GM10248 (cell line): ENCODE measurements at regions of chr14 and their contacts with region 1.

Region 1: GRCh38 chr14:89040460-89041259 is 216.2 kb downstream of the TTC8 start:
- DNase-seq: peak; percentile 80
- CTCF ChIP-seq: peak; percentile 95

Region 2: DNA sequence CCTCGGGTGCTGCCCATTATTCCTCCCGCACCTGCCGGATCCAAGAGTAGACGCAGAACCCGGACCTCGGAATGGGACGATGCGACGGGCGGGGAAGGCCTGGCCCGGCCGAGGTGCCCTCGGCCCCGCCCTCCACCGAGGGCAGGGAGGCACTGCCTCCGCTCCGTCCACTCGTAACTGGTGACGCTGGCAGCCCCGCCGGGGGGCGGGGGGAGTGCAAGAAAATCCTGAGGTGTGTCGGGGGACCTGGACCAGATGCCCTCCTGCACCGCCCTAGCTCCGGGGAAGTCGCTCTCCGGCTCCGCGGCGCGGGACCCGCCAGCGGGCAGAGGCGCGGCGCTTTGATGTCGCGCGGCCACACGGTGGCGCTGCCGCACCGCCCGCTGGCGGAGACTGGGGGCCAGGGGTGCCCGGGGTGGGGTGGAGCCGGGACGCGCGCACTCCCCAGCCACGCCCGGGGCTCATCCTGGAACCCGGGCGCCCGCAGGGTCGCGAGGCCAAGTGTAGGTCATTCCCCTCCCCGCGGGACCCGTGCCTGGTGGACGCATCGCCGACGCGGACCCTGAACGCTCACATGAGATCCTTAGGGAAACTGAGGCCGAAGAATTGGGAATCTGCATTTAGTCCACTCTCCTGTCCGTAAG is 13.4 kb before region 1 on chr14:
- CTCF ChIA-PET with region 1: interaction called, 25 read pairs
- POLR2A ChIA-PET with region 1: no interaction called
- DNase-seq: peak; percentile 88
- CTCF ChIP-seq: peak; percentile 85

Region 3: DNA sequence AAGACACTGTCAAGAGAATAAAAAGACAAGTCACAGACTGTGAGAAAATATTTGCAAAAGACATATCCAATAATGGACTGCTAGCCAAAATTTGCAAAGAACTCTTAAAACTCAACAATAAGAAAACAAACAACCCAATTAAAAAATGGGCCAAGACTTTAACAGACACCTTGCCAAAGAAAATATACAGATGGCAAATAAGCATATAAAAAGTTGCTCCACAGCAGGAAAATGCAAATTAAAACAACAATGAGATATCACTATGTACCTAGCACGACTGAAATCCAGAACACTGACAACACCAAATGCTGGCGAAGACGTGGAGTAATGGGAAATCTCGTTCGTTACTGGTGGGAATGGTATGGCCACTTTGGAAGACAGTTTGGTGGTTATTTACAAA is 12.6 kb after region 1 on chr14:
- CTCF ChIA-PET with region 1: interaction called, 12 read pairs
- POLR2A ChIA-PET with region 1: no interaction called
- DNase-seq: no peak
- CTCF ChIP-seq: no peak

Region 4: GRCh38 chr14:89908712-89909450 is 868.2 kb after region 1 on chr14:
- CTCF ChIA-PET with region 1: interaction called, 21 read pairs
- POLR2A ChIA-PET with region 1: no interaction called
- DNase-seq: no peak
- CTCF ChIP-seq: no peak

Region 5: GRCh38 chr14:89915114-89915878 is 874.6 kb after region 1 on chr14:
- CTCF ChIA-PET with region 1: interaction called, 21 read pairs
- POLR2A ChIA-PET with region 1: no interaction called
- DNase-seq: peak; percentile 64
- CTCF ChIP-seq: peak; percentile 92

Region 6: GRCh38 chr14:89922031-89922907 is 881.6 kb after region 1 on chr14:
- CTCF ChIA-PET with region 1: interaction called, 10 read pairs
- POLR2A ChIA-PET with region 1: no interaction called
- DNase-seq: no peak
- CTCF ChIP-seq: no peak